Left ventricle myocardium superior (tissue), 1 donor: ENCODE measurements at regions of chr13 and their contacts with region 1.

Region 1: DNA sequence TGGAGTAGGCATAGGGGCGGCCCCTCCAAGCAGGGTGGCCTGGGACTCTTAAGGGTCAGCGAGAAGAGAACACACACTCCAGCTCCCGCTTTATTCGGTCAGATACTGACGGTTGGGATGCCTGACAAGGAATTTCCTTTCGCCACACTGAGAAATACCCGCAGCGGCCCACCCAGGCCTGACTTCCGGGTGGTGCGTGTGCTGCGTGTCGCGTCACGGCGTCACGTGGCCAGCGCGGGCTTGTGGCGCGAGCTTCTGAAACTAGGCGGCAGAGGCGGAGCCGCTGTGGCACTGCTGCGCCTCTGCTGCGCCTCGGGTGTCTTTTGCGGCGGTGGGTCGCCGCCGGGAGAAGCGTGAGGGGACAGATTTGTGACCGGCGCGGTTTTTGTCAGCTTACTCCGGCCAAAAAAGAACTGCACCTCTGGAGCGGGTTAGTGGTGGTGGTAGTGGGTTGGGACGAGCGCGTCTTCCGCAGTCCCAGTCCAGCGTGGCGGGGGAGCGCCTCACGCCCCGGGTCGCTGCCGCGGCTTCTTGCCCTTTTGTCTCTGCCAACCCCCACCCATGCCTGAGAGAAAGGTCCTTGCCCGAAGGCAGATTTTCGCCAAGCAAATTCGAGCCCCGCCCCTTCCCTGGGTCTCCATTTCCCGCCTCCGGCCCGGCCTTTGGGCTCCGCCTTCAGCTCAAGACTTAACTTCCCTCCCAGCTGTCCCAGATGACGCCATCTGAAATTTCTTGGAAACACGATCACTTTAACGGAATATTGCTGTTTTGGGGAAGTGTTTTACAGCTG is at the starts of genes BRCA2 and ZAR1L:
- DNase-seq: peak; percentile 96
- ATAC-seq: peak; percentile 98
- total RNA-seq, gene BRCA2: 0.64 TPM
- total RNA-seq, gene ZAR1L: not detected

Region 2: GRCh38 chr13:31824705-31825517 is 490.5 kb before region 1 on chr13:
- intact Hi-C with region 1: loop called (anchors 10 kb)
- DNase-seq: no peak
- ATAC-seq: peak; percentile 70